ENCODE measurements at regions of chr20 and their contacts with region 1.

Region 1: GRCh38 chr20:49303065-49303552 is 25.3 kb upstream of the ZNFX1 start:
- DNase-seq: no peak
- H3K4me3 ChIP-seq: no peak overlapping the region
- H3K27ac ChIP-seq: no peak overlapping the region
- H3K4me1 ChIP-seq: peaks cover 3% of the 10 kb centered on the region
- CTCF ChIP-seq: no peak

Region 2: DNA sequence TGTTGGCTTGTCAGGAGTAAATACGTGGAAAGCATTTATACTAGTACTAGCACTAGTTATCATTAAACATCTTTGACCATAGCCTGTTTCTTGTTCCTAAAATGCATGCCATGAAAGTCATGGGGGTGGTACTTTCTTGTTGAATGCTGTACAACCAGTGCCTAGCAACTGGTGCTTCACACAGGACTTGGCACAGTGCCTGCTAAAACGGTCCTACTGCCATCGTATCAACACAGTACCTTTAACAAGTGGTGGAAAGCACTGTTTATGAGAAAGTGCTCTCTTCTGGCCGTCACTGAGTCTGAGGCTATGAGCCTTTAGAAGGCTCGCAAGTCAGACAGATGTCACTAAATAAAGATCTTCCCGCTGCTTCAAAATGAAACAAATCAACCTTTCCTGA is 46.8 kb before region 1 on chr20:
- CTCF ChIA-PET with region 1: no interaction called
- POLR2A ChIA-PET with region 1: no interaction called
- intact Hi-C with region 1: no loop called
- DNase-seq: no peak
- H3K4me3 ChIP-seq: no peak overlapping the region
- H3K27ac ChIP-seq: no peak overlapping the region
- H3K4me1 ChIP-seq: no peaks in the 10 kb centered on the region
- CTCF ChIP-seq: no peak

Region 3: GRCh38 chr20:50595988-50596689 is 1293.0 kb after region 1 on chr20:
- CTCF ChIA-PET with region 1: interaction called, 10 read pairs
- POLR2A ChIA-PET with region 1: no interaction called
- intact Hi-C with region 1: no loop called
- DNase-seq: no peak
- H3K4me3 ChIP-seq: no peak overlapping the region
- H3K27ac ChIP-seq: no peak overlapping the region
- H3K4me1 ChIP-seq: peaks cover 15% of the 10 kb centered on the region
- CTCF ChIP-seq: no peak